Esophagus squamous epithelium (tissue), 5 donors: ENCODE measurements at regions of chr5 and their contacts with region 1.

Region 1: GRCh38 chr5:153974131-153974812 is 64.4 kb downstream of the FAM114A2 start:
- DNase-seq: no peak
- H3K4me3 ChIP-seq: no peak overlapping the region
- H3K27ac ChIP-seq: no peak overlapping the region
- H3K4me1 ChIP-seq: peaks cover 0 to 14% (median 0%) of the 10 kb centered on the region in 3 donors
- H3K27me3 ChIP-seq: peaks cover 0 to 10% (median 0%) of the 10 kb centered on the region in 4 donors
- CTCF ChIP-seq: peak; percentile 28 to 75 (median 60)
- POLR2A ChIP-seq: no peak

Region 2: DNA sequence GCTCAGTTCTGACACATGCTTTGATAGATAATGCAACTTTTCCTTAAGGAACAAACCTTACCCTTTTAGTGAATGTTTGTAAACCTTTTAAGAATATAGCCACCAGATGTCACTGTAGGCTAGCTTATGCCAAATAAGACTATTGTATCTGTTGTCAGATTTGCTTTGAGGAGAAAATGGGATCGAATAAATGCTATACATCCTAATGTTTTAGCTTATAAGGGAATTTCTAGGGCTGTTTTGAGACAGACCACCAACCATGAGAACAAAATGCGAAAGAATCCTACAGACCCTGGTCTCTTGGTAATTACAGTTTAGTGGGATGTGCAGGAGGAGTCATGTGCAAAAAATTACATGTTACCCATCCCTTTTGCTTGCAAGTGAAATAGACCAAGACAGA is 1441.6 kb before region 1 on chr5:
- intact Hi-C with region 1: loop called (anchors 5 kb)
- DNase-seq: no peak
- H3K4me3 ChIP-seq: no peak overlapping the region
- H3K27ac ChIP-seq: no peak overlapping the region
- H3K4me1 ChIP-seq: no peaks in the 10 kb centered on the region
- H3K27me3 ChIP-seq: no peaks in the 10 kb centered on the region
- CTCF ChIP-seq: peak in 5 of 6 experiments; percentile 35 to 59 (median 43)
- POLR2A ChIP-seq: no peak

Region 3: DNA sequence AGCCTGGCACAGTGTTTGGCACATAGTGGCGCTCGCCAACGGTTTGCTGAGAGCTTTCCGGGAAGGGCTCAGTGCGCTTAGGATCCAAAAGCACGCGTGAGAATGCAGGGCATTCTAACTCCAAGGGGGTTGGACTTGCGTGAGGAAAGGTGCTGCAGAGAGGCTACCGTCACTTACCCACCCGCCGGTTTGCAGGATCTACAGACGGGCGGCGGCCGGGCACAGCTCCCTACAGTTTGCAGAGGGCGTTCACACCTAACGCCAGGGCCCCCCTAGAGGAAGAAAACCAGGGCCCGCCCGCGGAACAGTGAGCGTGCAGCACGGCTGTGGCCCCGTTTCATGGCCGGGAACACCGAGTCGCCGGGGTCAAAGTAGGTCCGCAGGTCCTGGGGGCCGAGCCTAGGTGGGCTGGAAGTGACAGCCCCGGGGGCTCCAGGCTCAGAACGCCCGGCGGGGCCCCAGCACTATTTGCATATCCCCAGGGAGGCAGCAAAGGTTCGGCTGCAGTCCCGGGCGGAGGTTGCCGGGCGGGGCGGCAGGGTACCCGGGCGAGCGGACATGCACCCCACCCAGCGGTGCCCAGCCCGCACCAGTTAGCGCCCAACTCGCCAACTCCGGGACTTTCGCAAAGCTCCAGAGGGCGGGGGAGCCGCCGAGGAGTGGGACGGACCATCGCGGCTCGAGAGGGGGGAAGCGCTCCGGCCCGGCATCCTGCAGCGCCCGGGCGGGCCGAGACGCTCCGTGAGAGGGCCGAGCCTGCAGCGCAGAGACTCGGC is 215.7 kb after region 1 on chr5:
- intact Hi-C with region 1: loop called (anchors 10 kb)
- DNase-seq: peak; percentile 58
- H3K4me3 ChIP-seq: peak overlapping the region; percentile 69 to 93 (median 88)
- H3K27ac ChIP-seq: peak overlapping the region; percentile 68 to 92 (median 83)
- H3K4me1 ChIP-seq: peaks cover 17 to 51% (median 26%) of the 10 kb centered on the region in 3 donors
- H3K27me3 ChIP-seq: peaks cover 0 to 11% (median 0%) of the 10 kb centered on the region in 4 donors
- CTCF ChIP-seq: peak in 5 of 6 experiments; percentile 15 to 36 (median 29)
- POLR2A ChIP-seq: peak in 1 of 4 donors; percentile 17

Region 4: GRCh38 chr5:154405078-154405792 is 431.0 kb after region 1 on chr5:
- intact Hi-C with region 1: loop called (anchors 10 kb)
- DNase-seq: peak; percentile 14
- H3K4me3 ChIP-seq: peak overlapping the region in 3 of 4 donors; percentile 20 to 52 (median 31)
- H3K27ac ChIP-seq: no peak overlapping the region
- H3K4me1 ChIP-seq: peaks cover 6 to 11% (median 6%) of the 10 kb centered on the region in 3 donors
- H3K27me3 ChIP-seq: no peaks in the 10 kb centered on the region
- CTCF ChIP-seq: peak; percentile 68 to 88 (median 78)
- POLR2A ChIP-seq: no peak